WTC11 (cell line): ENCODE measurements at regions of chr2 and their contacts with region 1.

Region 1: DNA sequence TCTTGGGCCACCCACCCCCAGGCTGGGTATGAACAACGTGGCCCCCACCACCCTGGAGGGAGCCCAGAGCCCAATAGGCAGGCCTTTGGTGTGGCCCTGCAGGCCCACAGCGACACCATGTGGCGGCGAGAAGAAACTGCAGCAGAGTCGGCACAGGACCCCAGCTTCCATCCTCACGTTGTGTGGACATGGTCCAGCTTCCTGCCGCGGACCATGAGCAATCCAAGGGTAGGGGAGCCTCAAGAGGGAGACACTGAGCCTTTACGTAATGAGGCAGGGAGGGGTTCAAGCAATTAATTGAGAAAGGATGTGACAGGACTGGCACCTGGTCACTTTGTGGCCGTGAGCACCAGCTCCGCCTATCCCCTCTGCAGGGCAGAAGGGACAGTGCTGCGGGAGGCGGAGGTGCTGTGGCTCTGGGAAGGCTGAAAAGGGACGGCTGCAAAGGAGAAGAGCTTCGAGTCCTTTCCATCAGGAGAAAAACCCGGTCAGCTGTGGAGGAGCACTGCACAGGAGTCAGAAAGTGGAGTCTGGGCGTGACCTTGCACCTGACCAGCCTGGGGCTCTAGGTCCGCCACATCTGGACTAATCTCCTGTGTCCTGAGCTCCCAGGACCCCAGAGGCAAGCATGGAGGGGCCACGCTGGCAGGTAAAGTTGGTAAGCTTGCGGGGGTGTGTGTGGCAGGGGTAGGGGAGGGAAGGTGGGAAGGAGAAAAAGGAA is 44.8 kb downstream of the TMEM37 start:
- DNase-seq: peak; percentile 82
- ATAC-seq: peak; percentile 92
- H3K4me3 Mint-ChIP-seq: peak overlapping the region; percentile 25
- H3K27ac Mint-ChIP-seq: no peak overlapping the region
- H3K4me1 Mint-ChIP-seq: peaks cover 11% of the 10 kb centered on the region
- H3K27me3 Mint-ChIP-seq: no peaks in the 10 kb centered on the region
- CTCF ChIP-seq: peak; percentile 99

Region 2: GRCh38 chr2:119352357-119352756 is 124.1 kb before region 1 on chr2:
- CTCF ChIA-PET with region 1: interaction called, 17 read pairs
- POLR2A ChIA-PET with region 1: no interaction called
- DNase-seq: no peak
- ATAC-seq: peak; percentile 61; the same call in 1 of the 2 replicates
- H3K4me3 Mint-ChIP-seq: no peak overlapping the region
- H3K27ac Mint-ChIP-seq: no peak overlapping the region
- H3K4me1 Mint-ChIP-seq: peaks cover 15% of the 10 kb centered on the region
- H3K27me3 Mint-ChIP-seq: no peaks in the 10 kb centered on the region; the same call in 1 of the 2 replicates
- CTCF ChIP-seq: no peak

Region 3: GRCh38 chr2:119407430-119408220 is 68.8 kb before region 1 on chr2:
- CTCF ChIA-PET with region 1: interaction called, 145 read pairs
- POLR2A ChIA-PET with region 1: no interaction called
- DNase-seq: peak; percentile 52
- ATAC-seq: peak; percentile 82
- H3K4me3 Mint-ChIP-seq: no peak overlapping the region
- H3K27ac Mint-ChIP-seq: no peak overlapping the region
- H3K4me1 Mint-ChIP-seq: peaks cover 8% of the 10 kb centered on the region
- H3K27me3 Mint-ChIP-seq: no peaks in the 10 kb centered on the region; the same call in 1 of the 2 replicates
- CTCF ChIP-seq: peak; percentile 73

Region 4: GRCh38 chr2:119431155-119431975 is 45.1 kb before region 1 on chr2 and contains the start of gene TMEM37:
- CTCF ChIA-PET with region 1: interaction called, 57 read pairs
- POLR2A ChIA-PET with region 1: interaction called, 3 read pairs
- DNase-seq: peak; percentile 79
- ATAC-seq: peak; percentile 69
- H3K4me3 Mint-ChIP-seq: peak within 1 kb of the TSS; percentile 87
- H3K27ac Mint-ChIP-seq: peak within 1 kb of the TSS; percentile 85
- H3K4me1 Mint-ChIP-seq: peaks cover 69% of the 10 kb centered on the region
- H3K27me3 Mint-ChIP-seq: peaks cover 25% of the 10 kb centered on the region
- CTCF ChIP-seq: no peak
- total RNA-seq, gene TMEM37: 7.6 to 9.6 TPM (median 8.5 TPM) in 3 replicates

Region 5: DNA sequence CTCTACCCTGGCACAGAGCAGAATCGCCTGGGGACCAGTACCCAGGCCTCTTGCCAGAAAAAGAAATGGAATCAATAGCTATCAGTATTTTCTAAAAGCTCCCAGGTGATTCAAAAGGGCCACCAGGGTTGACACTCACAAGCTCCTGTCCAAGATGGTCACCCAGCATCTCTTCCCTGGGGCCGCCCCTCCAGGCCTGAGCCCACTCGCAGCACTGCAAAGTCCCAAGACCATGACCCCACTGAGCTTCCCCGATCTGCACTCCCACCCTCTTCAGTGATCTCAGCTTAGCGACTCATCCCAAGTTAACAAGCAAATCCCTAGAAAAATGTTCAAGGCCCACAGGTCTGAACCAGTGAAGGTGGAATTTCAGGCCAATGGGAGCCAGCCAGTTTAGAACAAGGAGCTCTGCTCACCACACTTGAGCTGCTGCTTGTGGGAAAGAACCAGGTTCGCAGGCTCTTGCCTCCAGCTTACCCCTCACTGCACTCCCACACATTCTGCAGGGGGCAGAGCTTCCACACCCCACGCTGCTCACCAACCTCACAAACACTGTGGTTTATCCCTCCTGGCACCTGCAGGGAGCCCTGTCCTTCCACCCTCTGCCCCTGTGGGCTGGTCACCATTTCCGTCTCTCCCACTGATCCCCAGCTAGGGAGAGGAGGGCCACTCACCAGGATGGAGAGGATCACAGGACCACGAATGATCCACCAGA is 25.0 kb before region 1 on chr2:
- CTCF ChIA-PET with region 1: interaction called, 12 read pairs
- POLR2A ChIA-PET with region 1: no interaction called
- DNase-seq: no peak
- ATAC-seq: no peak
- H3K4me3 Mint-ChIP-seq: no peak overlapping the region
- H3K27ac Mint-ChIP-seq: no peak overlapping the region
- H3K4me1 Mint-ChIP-seq: peaks cover 26% of the 10 kb centered on the region
- H3K27me3 Mint-ChIP-seq: peaks cover 60% of the 10 kb centered on the region
- CTCF ChIP-seq: no peak

Region 6: GRCh38 chr2:119491808-119492533 is 15.5 kb after region 1 on chr2:
- CTCF ChIA-PET with region 1: interaction called, 72 read pairs
- POLR2A ChIA-PET with region 1: no interaction called
- DNase-seq: no peak
- ATAC-seq: peak; percentile 64
- H3K4me3 Mint-ChIP-seq: no peak overlapping the region
- H3K27ac Mint-ChIP-seq: peak overlapping the region; percentile 58; the same call in 1 of the 2 replicates
- H3K4me1 Mint-ChIP-seq: peaks cover 21% of the 10 kb centered on the region
- H3K27me3 Mint-ChIP-seq: peaks cover 5% of the 10 kb centered on the region
- CTCF ChIP-seq: no peak